HEK293 (cell line): ENCODE measurements at regions of chr11 and their contacts with region 1.

Region 1: GRCh38 chr11:86418917-86419316 is 44.2 kb downstream of the CCDC81 start:
- H3K4me3 ChIP-seq: no peak overlapping the region
- H3K27ac ChIP-seq: no peak overlapping the region
- H3K4me1 ChIP-seq: no peaks in the 10 kb centered on the region
- CTCF ChIP-seq: no peak

Region 2: GRCh38 chr11:86360775-86361395 is 58.0 kb before region 1 on chr11:
- CTCF ChIA-PET with region 1: interaction called, 14 read pairs
- POLR2A ChIA-PET with region 1: no interaction called
- H3K4me3 ChIP-seq: no peak overlapping the region
- H3K27ac ChIP-seq: no peak overlapping the region
- H3K4me1 ChIP-seq: no peaks in the 10 kb centered on the region
- CTCF ChIP-seq: no peak

Region 3: DNA sequence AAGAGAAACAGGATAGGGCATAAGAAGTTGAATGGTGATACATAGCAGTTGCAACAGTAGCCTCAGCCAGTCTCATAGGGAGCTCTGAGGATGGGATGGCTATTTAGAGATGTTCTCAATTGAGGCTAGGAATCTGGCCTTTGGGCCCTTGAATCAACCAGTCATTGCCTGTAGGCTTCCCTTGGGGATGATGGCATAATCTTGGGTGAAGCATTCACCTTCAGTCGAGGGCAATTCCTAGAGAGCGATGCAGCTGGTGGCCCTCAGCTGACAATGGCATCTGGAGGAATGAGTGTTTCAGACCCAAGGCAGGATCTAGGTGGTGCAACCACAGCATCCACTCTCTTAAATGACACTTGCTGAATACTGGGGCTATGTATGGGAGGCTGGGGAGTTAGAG is 16.8 kb after region 1 on chr11:
- CTCF ChIA-PET with region 1: no interaction called
- POLR2A ChIA-PET with region 1: no interaction called
- H3K4me3 ChIP-seq: no peak overlapping the region
- H3K27ac ChIP-seq: no peak overlapping the region
- H3K4me1 ChIP-seq: no peaks in the 10 kb centered on the region
- CTCF ChIP-seq: no peak